ENCODE measurements at regions of chr2 and their contacts with region 1.

Region 1: DNA sequence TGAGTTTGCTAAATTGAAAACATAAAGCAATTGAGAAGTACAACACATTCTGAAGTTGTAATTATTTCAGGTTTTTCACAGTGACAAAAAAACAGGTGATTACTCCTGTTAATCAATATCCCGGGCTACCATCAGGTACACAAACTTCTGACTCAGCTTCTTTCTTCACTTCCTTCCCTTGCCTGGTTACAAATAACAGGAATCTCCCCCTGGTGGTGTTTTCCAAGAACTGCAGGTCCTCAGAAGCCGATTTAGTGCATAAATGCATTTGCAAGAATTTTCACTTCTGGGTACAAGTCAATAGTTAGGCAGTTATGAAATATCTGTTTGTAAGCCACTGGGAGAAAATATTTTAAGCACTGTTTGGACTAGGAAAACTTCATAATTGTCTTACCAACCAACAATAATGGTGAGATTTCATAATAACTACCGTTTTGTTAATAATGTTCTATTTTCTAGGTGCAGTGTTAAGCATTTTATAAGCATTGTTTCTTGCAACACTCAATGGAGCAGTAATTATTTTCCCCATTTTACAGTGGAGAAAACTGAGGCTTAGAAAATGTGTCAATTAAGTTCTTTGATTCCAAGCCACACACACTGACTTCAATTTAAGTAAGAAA is 12.4 kb upstream of the GMCL1 start:
- DNase-seq: no peak
- ATAC-seq: no peak

Region 2: DNA sequence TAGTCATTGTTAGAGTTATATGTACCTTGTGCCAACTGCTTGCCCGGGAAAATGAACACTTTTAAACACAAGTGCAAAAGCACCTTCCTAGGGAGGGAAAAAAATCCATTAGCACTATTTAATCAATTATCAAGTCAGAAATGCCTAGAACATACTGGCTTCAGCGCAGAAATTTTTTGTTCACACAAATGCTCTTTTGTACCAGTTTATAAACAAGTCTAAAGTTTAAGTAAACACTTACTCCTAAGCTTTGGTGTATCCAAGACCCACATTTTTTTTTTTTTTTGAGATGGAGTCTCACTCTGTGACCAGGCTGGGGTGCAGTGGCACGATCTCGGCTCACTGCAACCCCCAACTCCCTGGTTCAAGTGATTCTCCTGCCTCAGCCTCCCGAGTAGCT is 460.6 kb before region 1 on chr2:
- intact Hi-C with region 1: no loop called
- DNase-seq: no peak
- ATAC-seq: no peak

Region 3: DNA sequence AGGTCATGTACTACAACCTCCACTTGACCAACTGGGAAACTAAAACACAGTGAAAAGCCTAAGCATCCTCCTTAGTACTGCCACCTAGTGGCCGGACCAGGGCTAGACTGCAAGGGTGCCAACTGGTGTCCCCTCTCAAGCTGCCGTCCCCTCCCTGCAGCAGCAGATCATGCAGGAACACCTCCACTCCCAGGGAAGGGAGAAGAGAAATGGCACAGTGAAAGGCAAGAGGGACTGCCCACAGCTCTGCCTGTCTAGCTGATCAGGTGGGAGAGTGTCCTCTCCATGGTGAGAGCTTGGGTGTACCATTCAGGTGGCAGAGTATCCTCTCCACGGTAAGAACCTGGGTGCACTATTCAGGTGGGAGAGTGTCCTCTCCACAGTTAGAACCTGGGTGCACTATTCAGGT is 251.6 kb before region 1 on chr2:
- intact Hi-C with region 1: loop called (anchors 10 kb)
- DNase-seq: peak; percentile 76
- ATAC-seq: peak; percentile 35

Region 4: GRCh38 chr2:69724540-69725159 is 92.4 kb before region 1 on chr2:
- intact Hi-C with region 1: loop called (anchors 1 kb)
- DNase-seq: peak; percentile 87
- ATAC-seq: peak; percentile 81

Region 5: GRCh38 chr2:69741619-69742466 is 75.2 kb before region 1 on chr2 and contains the start of gene ANXA4:
- intact Hi-C with region 1: loop called (anchors 5 kb)
- DNase-seq: peak; percentile 89
- ATAC-seq: peak; percentile 95
- total RNA-seq, gene ANXA4: 27.5 TPM

Measured in Right ventricle myocardium inferior (tissue), 1 donor.